CD4-positive, alpha-beta T cell (primary cell): ENCODE measurements at regions of chr14 and their contacts with region 1.

Region 1: GRCh38 chr14:101823511-101824120 is 62.1 kb downstream of the PPP2R5C start:
- DNase-seq: peak; percentile 50 to 91 (median 66)
- ATAC-seq: peak; percentile 61
- H3K4me3 ChIP-seq: peak overlapping the region; percentile 76
- H3K4me3 Mint-ChIP-seq: peak overlapping the region; percentile 90
- H3K27ac ChIP-seq: peak overlapping the region; percentile 98 to 99
- H3K27ac Mint-ChIP-seq: peak overlapping the region; percentile 98
- H3K4me1 ChIP-seq: peaks cover 79% of the 10 kb centered on the region
- H3K4me1 Mint-ChIP-seq: peaks cover 89% of the 10 kb centered on the region
- H3K27me3 ChIP-seq: no peaks in the 10 kb centered on the region
- H3K27me3 Mint-ChIP-seq: no peaks in the 10 kb centered on the region
- CTCF ChIP-seq: no peak

Region 2: DNA sequence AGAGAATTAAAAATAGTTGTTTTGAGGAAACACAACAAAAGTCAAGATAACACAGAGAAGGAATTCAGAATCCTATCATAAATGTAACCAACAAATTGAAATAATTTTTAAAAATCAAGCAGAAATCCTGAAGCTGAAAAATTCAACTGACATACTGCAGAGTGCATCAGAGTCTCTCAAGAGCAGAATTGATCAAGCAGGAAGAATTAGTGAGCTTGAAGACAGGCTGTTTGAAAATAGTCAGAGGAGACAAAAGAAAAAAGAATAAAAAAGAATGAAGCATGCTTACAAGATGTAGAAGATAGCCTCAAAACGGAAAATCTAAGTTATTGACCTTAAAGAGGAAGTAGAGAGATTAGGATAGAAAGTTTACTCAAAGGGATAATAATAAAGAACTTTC is 128.0 kb before region 1 on chr14:
- CTCF ChIA-PET with region 1: no interaction called
- POLR2A ChIA-PET with region 1: no interaction called
- intact Hi-C with region 1: no loop called
- DNase-seq: no peak
- ATAC-seq: no peak
- H3K4me3 ChIP-seq: no peak overlapping the region
- H3K4me3 Mint-ChIP-seq: no peak overlapping the region
- H3K27ac ChIP-seq: no peak overlapping the region
- H3K27ac Mint-ChIP-seq: no peak overlapping the region
- H3K4me1 ChIP-seq: no peaks in the 10 kb centered on the region
- H3K4me1 Mint-ChIP-seq: no peaks in the 10 kb centered on the region
- H3K27me3 ChIP-seq: no peaks in the 10 kb centered on the region
- H3K27me3 Mint-ChIP-seq: peaks cover 7% of the 10 kb centered on the region
- CTCF ChIP-seq: no peak

Region 3: GRCh38 chr14:101731187-101732080 is 92.2 kb before region 1 on chr14:
- CTCF ChIA-PET with region 1: interaction called, 3 read pairs
- POLR2A ChIA-PET with region 1: interaction called, 14 read pairs
- intact Hi-C with region 1: no loop called
- DNase-seq: peak; percentile 53 to 94 (median 78)
- ATAC-seq: peak; percentile 90
- H3K4me3 ChIP-seq: peak overlapping the region; percentile 36
- H3K4me3 Mint-ChIP-seq: peak overlapping the region; percentile 73
- H3K27ac ChIP-seq: peak overlapping the region; percentile 87 to 88
- H3K27ac Mint-ChIP-seq: peak overlapping the region; percentile 100
- H3K4me1 ChIP-seq: peaks cover 26% of the 10 kb centered on the region
- H3K4me1 Mint-ChIP-seq: peaks cover 47% of the 10 kb centered on the region
- H3K27me3 ChIP-seq: no peaks in the 10 kb centered on the region
- H3K27me3 Mint-ChIP-seq: no peaks in the 10 kb centered on the region
- CTCF ChIP-seq: no peak

Region 4: DNA sequence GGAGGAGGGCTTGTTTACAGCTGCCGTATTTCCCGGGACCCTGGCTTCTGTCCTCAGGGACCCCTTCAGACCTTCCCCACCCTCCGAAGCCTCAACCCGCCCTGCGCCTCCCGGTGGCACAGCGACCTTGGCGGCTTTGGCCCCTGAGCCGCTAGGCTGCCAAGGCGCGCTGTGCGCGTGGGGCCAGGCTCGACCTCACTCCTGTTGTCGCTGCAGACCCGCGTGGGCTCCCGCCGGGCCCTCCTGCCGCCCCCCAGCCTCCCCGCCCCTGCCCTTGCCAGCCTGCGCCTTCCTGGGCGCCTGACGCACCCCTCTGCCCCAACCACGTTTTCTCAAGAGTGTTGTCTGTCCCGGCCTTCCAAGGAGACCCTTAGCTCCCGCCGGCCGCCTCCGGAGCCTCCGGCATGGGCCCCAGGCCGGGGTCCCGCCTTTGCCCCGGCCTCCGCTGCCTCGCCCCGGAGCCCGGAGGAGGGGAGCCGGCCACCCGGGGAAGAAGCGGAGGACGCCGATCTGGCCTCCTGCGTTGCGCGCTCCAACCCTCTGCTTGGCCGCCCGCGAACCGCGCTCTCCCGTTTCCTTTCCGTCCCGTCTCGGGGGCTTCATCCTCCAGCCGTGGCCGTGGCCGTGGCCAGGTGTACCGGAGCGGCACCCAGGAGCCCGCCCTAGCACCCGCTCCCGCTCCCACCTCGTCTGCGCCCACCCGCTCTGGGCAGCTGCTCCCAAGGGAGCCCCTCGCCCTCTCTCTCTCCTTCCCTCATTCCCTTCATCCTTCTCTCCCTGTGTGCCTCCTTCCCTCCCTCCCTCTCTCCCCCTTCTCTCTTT is 42.2 kb before region 1 on chr14:
- CTCF ChIA-PET with region 1: interaction called, 3 read pairs
- POLR2A ChIA-PET with region 1: interaction called, 10 read pairs
- intact Hi-C with region 1: no loop called
- DNase-seq: peak in 9 of 14 experiments; percentile 11 to 59 (median 26)
- ATAC-seq: peak; percentile 67
- H3K4me3 ChIP-seq: peak overlapping the region; percentile 64
- H3K4me3 Mint-ChIP-seq: peak overlapping the region; percentile 73
- H3K27ac ChIP-seq: no peak overlapping the region
- H3K27ac Mint-ChIP-seq: no peak overlapping the region
- H3K4me1 ChIP-seq: peaks cover 12% of the 10 kb centered on the region
- H3K4me1 Mint-ChIP-seq: peaks cover 24% of the 10 kb centered on the region
- H3K27me3 ChIP-seq: peaks cover 0 to 2% of the 10 kb centered on the region in 2 experiments
- H3K27me3 Mint-ChIP-seq: no peaks in the 10 kb centered on the region
- CTCF ChIP-seq: no peak

Region 5: GRCh38 chr14:101834800-101835547 is 11.4 kb after region 1 on chr14:
- CTCF ChIA-PET with region 1: interaction called, 5 read pairs
- POLR2A ChIA-PET with region 1: interaction called, 46 read pairs
- intact Hi-C with region 1: loop called (anchors 2 kb)
- DNase-seq: no peak
- ATAC-seq: no peak
- H3K4me3 ChIP-seq: no peak overlapping the region
- H3K4me3 Mint-ChIP-seq: peak overlapping the region; percentile 34
- H3K27ac ChIP-seq: peak overlapping the region; percentile 1 to 14
- H3K27ac Mint-ChIP-seq: peak overlapping the region; percentile 87
- H3K4me1 ChIP-seq: peaks cover 90% of the 10 kb centered on the region
- H3K4me1 Mint-ChIP-seq: peaks cover 92% of the 10 kb centered on the region
- H3K27me3 ChIP-seq: no peaks in the 10 kb centered on the region
- H3K27me3 Mint-ChIP-seq: no peaks in the 10 kb centered on the region
- CTCF ChIP-seq: no peak

Region 6: GRCh38 chr14:101854366-101854765 is 30.8 kb after region 1 on chr14:
- CTCF ChIA-PET with region 1: interaction called, 5 read pairs
- POLR2A ChIA-PET with region 1: interaction called, 18 read pairs
- intact Hi-C with region 1: no loop called
- DNase-seq: peak in 5 of 14 experiments; percentile 24 to 62 (median 59)
- ATAC-seq: peak; percentile 87
- H3K4me3 ChIP-seq: no peak overlapping the region
- H3K4me3 Mint-ChIP-seq: peak overlapping the region; percentile 7
- H3K27ac ChIP-seq: peak overlapping the region in 1 of 2 donors; percentile 10
- H3K27ac Mint-ChIP-seq: peak overlapping the region; percentile 73
- H3K4me1 ChIP-seq: peaks cover 63% of the 10 kb centered on the region
- H3K4me1 Mint-ChIP-seq: peaks cover 93% of the 10 kb centered on the region
- H3K27me3 ChIP-seq: no peaks in the 10 kb centered on the region
- H3K27me3 Mint-ChIP-seq: no peaks in the 10 kb centered on the region
- CTCF ChIP-seq: no peak

Region 7: GRCh38 chr14:101927859-101928258 is 104.2 kb after region 1 on chr14:
- CTCF ChIA-PET with region 1: no interaction called
- POLR2A ChIA-PET with region 1: no interaction called
- intact Hi-C with region 1: no loop called
- DNase-seq: peak in 3 of 14 experiments; percentile 10 to 44 (median 34)
- ATAC-seq: no peak
- H3K4me3 ChIP-seq: no peak overlapping the region
- H3K4me3 Mint-ChIP-seq: no peak overlapping the region
- H3K27ac ChIP-seq: no peak overlapping the region
- H3K27ac Mint-ChIP-seq: peak overlapping the region; percentile 20
- H3K4me1 ChIP-seq: no peaks in the 10 kb centered on the region
- H3K4me1 Mint-ChIP-seq: no peaks in the 10 kb centered on the region
- H3K27me3 ChIP-seq: no peaks in the 10 kb centered on the region
- H3K27me3 Mint-ChIP-seq: no peaks in the 10 kb centered on the region
- CTCF ChIP-seq: no peak

Region 8: GRCh38 chr14:101947906-101948665 is 124.5 kb after region 1 on chr14:
- CTCF ChIA-PET with region 1: no interaction called
- POLR2A ChIA-PET with region 1: interaction called, 7 read pairs
- intact Hi-C with region 1: loop called in 1 of 2 experiments (anchors 1 kb)
- DNase-seq: peak; percentile 98 to 100 (median 99)
- ATAC-seq: peak; percentile 96
- H3K4me3 ChIP-seq: peak overlapping the region; percentile 78
- H3K4me3 Mint-ChIP-seq: peak overlapping the region; percentile 94
- H3K27ac ChIP-seq: peak overlapping the region; percentile 87 to 93
- H3K27ac Mint-ChIP-seq: peak overlapping the region; percentile 99
- H3K4me1 ChIP-seq: peaks cover 23% of the 10 kb centered on the region
- H3K4me1 Mint-ChIP-seq: peaks cover 18% of the 10 kb centered on the region
- H3K27me3 ChIP-seq: peaks cover 8 to 22% of the 10 kb centered on the region in 2 experiments
- H3K27me3 Mint-ChIP-seq: peaks cover 31% of the 10 kb centered on the region
- CTCF ChIP-seq: no peak